ENCODE measurements at regions of chr13 and their contacts with region 1.

Region 1: DNA sequence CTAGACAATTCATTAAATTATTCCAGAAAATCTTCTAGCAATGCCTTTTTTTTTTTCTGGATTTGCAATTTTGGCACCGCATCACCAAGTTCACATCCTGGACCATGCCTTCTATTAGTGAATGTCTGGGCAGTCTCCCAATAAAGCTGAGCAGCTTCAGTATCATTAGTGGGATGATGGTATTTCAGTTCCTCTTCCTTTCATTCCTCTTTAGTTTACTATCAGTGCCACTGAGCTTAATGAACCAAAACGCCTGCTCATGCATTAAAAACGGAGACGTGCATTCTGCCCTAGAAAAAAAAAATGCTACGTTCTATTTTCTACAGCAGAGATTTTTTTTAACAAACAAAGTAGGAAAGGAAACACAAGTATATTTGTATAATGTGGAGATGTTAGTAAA is 343.0 kb downstream of the PCDH9 start:
- DNase-seq: peak in 1 of 10 donors; percentile 11
- H3K4me3 ChIP-seq: peak overlapping the region in 55 of 59 donors; percentile 2 to 52 (median 30)
- H3K27ac ChIP-seq: peak overlapping the region in 56 of 59 donors; percentile 1 to 94 (median 86)
- H3K27me3 ChIP-seq: no peaks in the 10 kb centered on the region
- CTCF ChIP-seq: peak in 1 of 56 donors; percentile 12

Region 2: GRCh38 chr13:65656740-65657329 is 1230.3 kb before region 1 on chr13:
- intact Hi-C with region 1: loop called in 1 of 2 experiments (anchors 5 kb)
- DNase-seq: no peak
- H3K4me3 ChIP-seq: no peak overlapping the region
- H3K27ac ChIP-seq: no peak overlapping the region
- H3K27me3 ChIP-seq: no peaks in the 10 kb centered on the region
- CTCF ChIP-seq: peak; percentile 35 to 80 (median 62)

Region 3: DNA sequence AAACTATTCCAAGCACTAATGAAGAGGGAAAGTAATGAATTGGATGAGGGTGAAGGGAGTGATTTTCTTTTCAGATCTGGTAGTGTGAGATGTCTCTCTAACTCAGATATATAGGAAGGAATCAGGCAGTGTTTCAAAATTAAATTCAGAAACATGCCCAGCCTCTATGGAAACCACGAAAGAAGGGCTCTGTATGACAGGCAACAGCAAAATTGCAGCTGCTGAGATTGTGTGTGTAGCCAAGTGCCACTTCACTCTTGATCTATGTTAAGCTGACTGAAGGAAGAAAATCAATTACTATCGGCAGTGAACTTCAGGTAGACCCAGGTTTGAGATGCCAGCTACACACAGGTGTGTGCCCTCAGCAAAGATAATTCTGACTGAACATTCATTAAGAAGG is 44.3 kb before region 1 on chr13:
- intact Hi-C with region 1: loop called in 1 of 2 experiments (anchors 5 kb)
- DNase-seq: no peak
- H3K4me3 ChIP-seq: no peak overlapping the region
- H3K27ac ChIP-seq: peak overlapping the region in 45 of 59 donors; percentile 3 to 69 (median 47)
- H3K27me3 ChIP-seq: no peaks in the 10 kb centered on the region
- CTCF ChIP-seq: no peak

Region 4: DNA sequence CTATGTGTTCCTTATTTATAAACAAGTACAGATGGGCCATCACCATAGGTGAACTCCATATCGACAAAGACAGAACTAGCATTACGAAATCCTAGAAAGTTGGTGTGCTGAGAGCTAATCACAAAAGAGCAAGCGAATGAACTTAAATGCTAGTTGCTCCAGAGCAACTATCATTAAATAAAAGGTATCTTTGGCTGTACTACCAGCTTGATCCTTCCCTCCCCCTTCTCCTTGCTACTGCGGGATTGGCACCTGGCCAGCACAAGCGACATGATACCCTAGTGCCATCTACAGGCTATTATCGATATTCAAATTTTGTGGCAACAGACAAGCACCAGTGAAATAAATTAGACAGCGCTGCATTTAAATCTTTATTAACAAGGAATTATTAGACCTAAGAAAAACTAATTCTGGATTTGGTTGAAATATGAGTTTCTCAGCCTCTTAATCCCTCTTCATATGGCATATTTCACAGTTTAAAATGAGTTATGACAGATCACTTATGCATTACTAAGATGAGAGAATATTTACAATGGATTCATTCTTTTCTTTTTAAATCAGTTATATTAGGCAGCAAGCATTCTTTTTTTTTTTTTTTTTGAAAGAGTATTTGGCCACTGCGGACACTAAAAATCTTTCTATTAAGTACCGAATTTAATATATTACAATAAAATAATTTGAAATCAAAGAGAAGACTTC is 337.2 kb after region 1 on chr13:
- intact Hi-C with region 1: loop called in 1 of 2 experiments (anchors 5 kb)
- DNase-seq: peak; percentile 73 to 88 (median 84)
- H3K4me3 ChIP-seq: peak overlapping the region; percentile 53 to 97 (median 84)
- H3K27ac ChIP-seq: peak overlapping the region in 57 of 59 donors; percentile 26 to 99 (median 87)
- H3K27me3 ChIP-seq: no peaks in the 10 kb centered on the region
- CTCF ChIP-seq: peak; percentile 68 to 94 (median 84)

Measured in dorsolateral prefrontal cortex (tissue), 120 donors.